Esophagus muscularis mucosa (tissue), 4 donors: ENCODE measurements at regions of chr19 and their contacts with region 1.

Region 1: GRCh38 chr19:7101498-7102253 is 32.2 kb downstream of the ZNF557 start:
- DNase-seq: no peak
- H3K4me3 ChIP-seq: no peak overlapping the region
- H3K27ac ChIP-seq: no peak overlapping the region
- H3K4me1 ChIP-seq: peaks cover 3 to 15% (median 9%) of the 10 kb centered on the region in 4 donors
- H3K27me3 ChIP-seq: peaks cover 0 to 7% (median 0%) of the 10 kb centered on the region in 4 donors
- CTCF ChIP-seq: no peak
- EP300 ChIP-seq: no peak
- POLR2A ChIP-seq: no peak

Region 2: DNA sequence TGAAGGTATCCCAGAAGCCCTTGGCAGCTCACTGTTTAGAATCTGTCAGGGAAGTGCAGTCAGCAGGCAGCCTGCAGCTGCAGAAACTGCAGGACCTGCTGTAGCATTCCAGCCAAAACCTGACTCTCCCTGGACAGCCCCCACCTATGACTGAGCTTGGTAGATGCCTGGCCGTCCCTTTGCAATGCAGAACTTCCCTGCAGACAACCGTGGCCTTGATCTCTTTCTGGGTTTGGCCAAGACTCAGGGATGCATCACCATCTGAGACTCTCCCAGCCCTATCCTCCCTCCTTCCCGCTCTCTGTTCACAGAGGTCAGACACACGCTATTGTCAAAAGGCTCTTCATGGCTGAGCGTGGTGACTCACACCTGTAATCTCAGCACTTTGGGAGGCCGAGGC is 67.3 kb after region 1 on chr19:
- intact Hi-C with region 1: no loop called
- DNase-seq: no peak
- H3K4me3 ChIP-seq: no peak overlapping the region
- H3K27ac ChIP-seq: no peak overlapping the region
- H3K4me1 ChIP-seq: no peaks in the 10 kb centered on the region
- H3K27me3 ChIP-seq: no peaks in the 10 kb centered on the region
- CTCF ChIP-seq: no peak
- EP300 ChIP-seq: no peak
- POLR2A ChIP-seq: no peak

Region 3: GRCh38 chr19:7340959-7341837 is 239.5 kb after region 1 on chr19:
- intact Hi-C with region 1: loop called (anchors 2 kb)
- DNase-seq: peak; percentile 97
- H3K4me3 ChIP-seq: no peak overlapping the region
- H3K27ac ChIP-seq: no peak overlapping the region
- H3K4me1 ChIP-seq: peaks cover 0 to 12% (median 6%) of the 10 kb centered on the region in 4 donors
- H3K27me3 ChIP-seq: peaks cover 0 to 3% (median 0%) of the 10 kb centered on the region in 4 donors
- CTCF ChIP-seq: peak; percentile 94 to 96 (median 95)
- EP300 ChIP-seq: no peak
- POLR2A ChIP-seq: no peak